Heart right ventricle (tissue), 16 donors: ENCODE measurements at regions of chr15 and their contacts with region 1.

Region 1: GRCh38 chr15:59484399-59484798 is 46.4 kb downstream of the FAM81A start:
- DNase-seq: peak in 1 of 2 donors; percentile 11
- ATAC-seq: peak; percentile 23 to 94 (median 76)
- H3K4me3 ChIP-seq: no peak overlapping the region
- H3K27ac ChIP-seq: no peak overlapping the region
- H3K4me1 ChIP-seq: peaks cover 0 to 10% (median 0%) of the 10 kb centered on the region in 9 donors
- H3K27me3 ChIP-seq: no peaks in the 10 kb centered on the region
- CTCF ChIP-seq: no peak

Region 2: GRCh38 chr15:59247364-59247763 is 237.0 kb before region 1 on chr15:
- intact Hi-C with region 1: loop called in 1 of 10 experiments (anchors 10 kb)
- DNase-seq: peak in 1 of 2 donors; percentile 62
- ATAC-seq: peak; percentile 72 to 94 (median 82)
- H3K4me3 ChIP-seq: no peak overlapping the region
- H3K27ac ChIP-seq: no peak overlapping the region
- H3K4me1 ChIP-seq: peaks cover 0 to 28% (median 9%) of the 10 kb centered on the region in 9 donors
- H3K27me3 ChIP-seq: no peaks in the 10 kb centered on the region
- CTCF ChIP-seq: peak; percentile 34 to 80 (median 62)

Region 3: DNA sequence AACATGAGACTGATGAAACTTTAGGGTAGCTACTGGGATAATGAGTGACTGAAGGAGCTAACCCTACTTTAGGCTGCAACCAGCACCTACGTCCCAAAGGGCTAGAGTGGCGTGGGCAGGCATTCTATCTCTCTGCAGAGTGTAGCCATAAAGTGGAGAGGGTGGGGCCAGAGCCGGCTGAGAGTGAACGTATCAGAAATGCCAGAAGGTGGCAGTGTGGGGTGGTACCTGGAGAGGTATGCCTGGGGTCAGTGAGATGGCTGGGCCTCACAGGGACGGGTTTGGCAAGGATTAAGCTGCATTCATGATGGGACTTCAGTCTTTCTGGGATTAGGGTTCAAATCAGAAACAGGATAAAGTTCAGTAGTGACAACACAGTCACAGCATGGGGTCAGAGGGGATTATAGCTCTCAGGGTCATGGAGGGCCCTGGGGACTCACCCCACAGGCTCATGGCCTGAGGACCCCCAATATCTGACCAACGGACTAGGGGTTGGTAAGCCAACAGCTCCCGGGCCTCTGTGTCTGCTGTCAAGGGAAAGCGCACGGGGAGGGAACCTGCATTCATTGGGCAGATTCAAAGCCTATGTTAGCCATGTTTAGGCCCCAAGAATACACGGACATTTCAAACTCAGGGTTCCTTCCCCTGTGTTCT is 433.2 kb after region 1 on chr15:
- intact Hi-C with region 1: no loop called
- DNase-seq: peak; percentile 10 to 16
- ATAC-seq: peak in 3 of 8 donors; percentile 49 to 75 (median 59)
- H3K4me3 ChIP-seq: no peak overlapping the region
- H3K27ac ChIP-seq: no peak overlapping the region
- H3K4me1 ChIP-seq: no peaks in the 10 kb centered on the region
- H3K27me3 ChIP-seq: peaks cover 0 to 67% (median 48%) of the 10 kb centered on the region in 7 donors
- CTCF ChIP-seq: peak in 6 of 9 donors; percentile 16 to 53 (median 29)